ENCODE measurements at regions of chr12 and their contacts with region 1.

Region 1: GRCh38 chr12:96516472-96517430 is 27.4 kb downstream of the CFAP54 start:
- DNase-seq: peak; percentile 93
- ATAC-seq: peak; percentile 85
- H3K4me3 Mint-ChIP-seq: peak overlapping the region; percentile 19
- H3K27ac Mint-ChIP-seq: peak overlapping the region; percentile 76
- H3K4me1 Mint-ChIP-seq: peaks cover 20% of the 10 kb centered on the region
- H3K27me3 Mint-ChIP-seq: no peaks in the 10 kb centered on the region

Region 2: DNA sequence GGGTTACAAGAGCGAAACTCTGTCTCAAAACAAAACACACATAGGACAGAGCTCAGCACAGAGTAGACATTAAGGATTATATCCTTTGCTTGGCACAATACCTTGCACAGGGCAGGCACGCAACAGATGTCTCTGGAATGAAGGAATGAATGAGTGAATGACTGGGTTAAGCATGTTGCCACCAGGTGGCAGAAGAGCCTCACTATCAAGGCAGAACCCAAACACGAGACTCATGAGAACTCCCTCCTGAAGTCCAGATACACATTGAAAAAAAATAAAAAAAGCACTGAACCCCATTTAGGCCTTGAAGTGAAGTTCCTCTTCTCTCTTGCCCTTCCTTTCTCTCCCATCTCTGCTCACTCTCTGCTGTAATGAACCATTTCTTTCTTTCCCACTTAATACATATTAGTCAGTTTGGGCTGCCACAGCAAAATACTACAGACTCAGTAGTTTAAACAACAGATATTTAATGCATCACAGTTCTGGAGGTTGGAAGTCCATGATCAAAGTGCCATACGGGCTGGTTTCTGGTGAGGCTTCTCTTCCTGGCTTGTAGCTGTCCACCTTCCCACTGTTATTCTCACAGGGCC is 454.8 kb before region 1 on chr12:
- CTCF ChIA-PET with region 1: interaction called, 22 read pairs
- POLR2A ChIA-PET with region 1: no interaction called
- DNase-seq: peak; percentile 85
- ATAC-seq: peak; percentile 80
- H3K4me3 Mint-ChIP-seq: no peak overlapping the region
- H3K27ac Mint-ChIP-seq: peak overlapping the region; percentile 5
- H3K4me1 Mint-ChIP-seq: peaks cover 24% of the 10 kb centered on the region
- H3K27me3 Mint-ChIP-seq: no peaks in the 10 kb centered on the region

Region 3: DNA sequence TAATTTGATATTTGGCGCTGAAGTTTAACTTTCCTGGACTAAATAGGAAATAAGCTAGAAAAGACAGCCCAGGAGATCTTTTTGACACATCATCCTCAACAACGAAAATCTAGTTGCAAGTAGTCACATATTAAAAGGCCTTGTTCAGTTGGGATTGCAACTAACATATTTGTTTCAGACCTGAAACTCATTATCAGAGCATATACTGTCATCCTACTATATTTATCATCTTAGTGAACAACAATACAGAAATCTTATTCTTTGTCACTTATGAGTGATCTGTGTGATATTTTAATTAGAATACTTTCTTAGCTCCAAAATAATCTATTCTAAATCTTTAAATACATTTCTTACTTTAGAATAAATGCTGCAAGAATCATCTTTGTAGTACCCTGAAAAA is 250.5 kb before region 1 on chr12:
- CTCF ChIA-PET with region 1: interaction called, 10 read pairs
- POLR2A ChIA-PET with region 1: no interaction called
- DNase-seq: no peak
- ATAC-seq: no peak
- H3K4me3 Mint-ChIP-seq: no peak overlapping the region
- H3K27ac Mint-ChIP-seq: no peak overlapping the region
- H3K4me1 Mint-ChIP-seq: no peaks in the 10 kb centered on the region
- H3K27me3 Mint-ChIP-seq: no peaks in the 10 kb centered on the region

Region 4: GRCh38 chr12:96489103-96490056 is 27.4 kb before region 1 on chr12 and contains the start of gene CFAP54:
- CTCF ChIA-PET with region 1: interaction called, 55 read pairs
- POLR2A ChIA-PET with region 1: interaction called, 4 read pairs
- DNase-seq: peak; percentile 96
- ATAC-seq: peak; percentile 84
- H3K4me3 Mint-ChIP-seq: peak within 1 kb of the TSS; percentile 86
- H3K27ac Mint-ChIP-seq: peak within 1 kb of the TSS; percentile 53
- H3K4me1 Mint-ChIP-seq: peaks cover 35% of the 10 kb centered on the region
- H3K27me3 Mint-ChIP-seq: peaks cover 12% of the 10 kb centered on the region
- total RNA-seq, gene CFAP54: 0.18 to 1.2 TPM

Region 5: DNA sequence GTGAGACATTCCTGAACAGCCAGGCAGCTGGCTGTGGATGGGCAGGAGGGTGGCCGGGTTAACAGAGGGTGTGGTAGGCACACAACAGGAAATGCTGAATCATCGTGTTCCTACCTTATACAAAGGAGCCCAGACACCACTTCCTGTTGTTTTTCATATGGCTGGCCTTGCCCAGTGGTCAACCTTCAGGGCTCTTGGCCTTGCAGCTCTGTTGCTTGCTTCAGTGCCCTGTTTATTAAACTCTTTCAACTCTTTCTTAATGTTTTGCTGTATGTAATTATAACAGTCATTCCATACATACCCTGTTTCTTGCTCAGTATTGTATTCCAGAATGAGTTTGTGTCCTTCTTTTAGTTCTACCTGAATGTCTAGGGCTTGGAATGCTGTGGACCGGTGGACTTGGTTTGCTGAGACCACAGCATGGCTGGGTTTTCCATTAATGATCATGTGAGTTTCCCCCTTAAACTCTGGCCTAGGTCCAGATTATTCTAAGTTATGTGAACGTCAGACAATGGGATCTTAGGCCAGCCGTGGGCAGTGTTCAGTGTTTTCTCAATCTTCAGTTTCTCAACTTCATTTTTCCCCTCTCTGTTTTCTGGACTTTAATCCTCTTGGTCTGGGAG is 15.5 kb before region 1 on chr12:
- CTCF ChIA-PET with region 1: interaction called, 25 read pairs
- POLR2A ChIA-PET with region 1: no interaction called
- DNase-seq: peak; percentile 57
- ATAC-seq: peak; percentile 87
- H3K4me3 Mint-ChIP-seq: peak overlapping the region; percentile 16
- H3K27ac Mint-ChIP-seq: peak overlapping the region; percentile 78
- H3K4me1 Mint-ChIP-seq: peaks cover 52% of the 10 kb centered on the region
- H3K27me3 Mint-ChIP-seq: no peaks in the 10 kb centered on the region